ENCODE measurements at regions of chr16 and their contacts with region 1.

Region 1: DNA sequence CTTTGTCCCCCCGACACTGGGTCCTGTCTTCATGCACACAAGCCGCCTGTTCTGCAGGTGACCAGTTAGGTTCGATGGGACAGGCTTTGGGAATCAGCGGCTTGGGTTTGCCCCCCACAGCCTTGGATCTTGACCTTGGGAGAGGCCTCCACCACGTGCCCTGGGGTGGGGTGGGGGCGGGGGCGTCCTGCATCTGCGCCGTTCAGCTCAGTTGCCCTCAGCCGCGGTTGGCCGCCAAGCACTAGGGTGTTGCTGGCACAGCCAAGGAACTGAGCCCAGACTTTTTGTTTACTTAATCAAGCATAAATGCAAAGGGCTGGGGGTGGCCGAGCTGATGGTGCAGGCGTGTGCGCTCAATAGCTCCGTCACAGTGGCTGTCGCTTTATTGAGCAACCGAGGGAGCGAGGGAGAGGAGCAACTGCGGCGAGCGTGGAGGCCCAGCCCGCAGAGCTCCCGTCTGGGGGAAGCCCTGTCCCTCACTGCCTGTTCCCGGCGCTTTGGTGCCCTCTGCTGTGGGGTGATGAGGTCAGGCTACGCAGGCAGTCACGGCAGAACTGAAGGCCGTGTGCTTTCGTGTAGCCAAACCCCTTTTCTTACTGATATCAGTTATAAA is 33.9 kb downstream of the JPH3 start:
- DNase-seq: peak; percentile 93
- ATAC-seq: peak; percentile 91
- H3K4me3 Mint-ChIP-seq: peak overlapping the region; percentile 63
- H3K27ac Mint-ChIP-seq: no peak overlapping the region
- H3K4me1 Mint-ChIP-seq: peaks cover 17% of the 10 kb centered on the region
- H3K27me3 Mint-ChIP-seq: no peaks in the 10 kb centered on the region
- CTCF ChIP-seq: peak; percentile 80

Region 2: GRCh38 chr16:87375426-87376135 is 260.6 kb before region 1 on chr16:
- CTCF ChIA-PET with region 1: no interaction called
- POLR2A ChIA-PET with region 1: no interaction called
- intact Hi-C with region 1: no loop called
- DNase-seq: no peak
- ATAC-seq: no peak
- H3K4me3 Mint-ChIP-seq: no peak overlapping the region
- H3K27ac Mint-ChIP-seq: no peak overlapping the region
- H3K4me1 Mint-ChIP-seq: peaks cover 48% of the 10 kb centered on the region
- H3K27me3 Mint-ChIP-seq: no peaks in the 10 kb centered on the region
- CTCF ChIP-seq: no peak

Region 3: GRCh38 chr16:87393680-87394055 is 242.5 kb before region 1 on chr16:
- CTCF ChIA-PET with region 1: interaction called, 25 read pairs
- POLR2A ChIA-PET with region 1: no interaction called
- intact Hi-C with region 1: no loop called
- DNase-seq: no peak
- ATAC-seq: no peak
- H3K4me3 Mint-ChIP-seq: peak overlapping the region; percentile 83
- H3K27ac Mint-ChIP-seq: peak overlapping the region; percentile 90
- H3K4me1 Mint-ChIP-seq: peaks cover 43% of the 10 kb centered on the region
- H3K27me3 Mint-ChIP-seq: no peaks in the 10 kb centered on the region
- CTCF ChIP-seq: no peak

Region 4: DNA sequence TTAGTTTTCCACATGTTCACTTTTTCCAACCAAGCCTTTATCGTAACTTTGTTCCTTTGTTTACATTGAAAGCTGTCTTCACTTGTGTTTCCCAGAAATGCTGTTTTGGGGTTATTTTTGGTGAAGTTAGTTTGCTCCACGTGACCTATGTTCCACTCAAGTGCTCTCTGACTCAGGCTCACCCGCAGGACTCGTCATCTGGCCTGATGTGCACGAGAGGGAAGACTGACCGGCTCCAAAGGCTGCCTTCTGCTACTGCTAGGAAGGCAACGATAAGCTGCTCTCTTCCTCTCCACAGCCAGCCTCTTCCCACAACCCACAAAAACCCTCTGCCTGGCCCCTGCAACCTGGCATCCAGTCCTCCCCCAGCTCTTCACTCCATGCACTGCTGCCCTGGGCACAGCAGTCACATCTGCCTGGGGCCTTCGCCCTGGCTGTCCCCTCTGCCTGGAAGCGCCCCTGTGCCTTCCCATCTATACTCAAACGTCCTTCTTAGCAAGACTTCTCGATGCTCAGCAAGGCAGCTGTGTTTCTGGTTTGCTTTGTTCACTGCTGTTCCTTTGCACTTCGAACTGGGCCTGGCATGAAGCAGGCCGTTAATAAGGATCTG is 171.4 kb before region 1 on chr16:
- CTCF ChIA-PET with region 1: interaction called, 16 read pairs
- POLR2A ChIA-PET with region 1: interaction called, 4 read pairs
- intact Hi-C with region 1: no loop called
- DNase-seq: peak; percentile 67
- ATAC-seq: peak; percentile 65
- H3K4me3 Mint-ChIP-seq: peak overlapping the region; percentile 66
- H3K27ac Mint-ChIP-seq: peak overlapping the region; percentile 86
- H3K4me1 Mint-ChIP-seq: peaks cover 40% of the 10 kb centered on the region
- H3K27me3 Mint-ChIP-seq: no peaks in the 10 kb centered on the region
- CTCF ChIP-seq: no peak

Region 5: DNA sequence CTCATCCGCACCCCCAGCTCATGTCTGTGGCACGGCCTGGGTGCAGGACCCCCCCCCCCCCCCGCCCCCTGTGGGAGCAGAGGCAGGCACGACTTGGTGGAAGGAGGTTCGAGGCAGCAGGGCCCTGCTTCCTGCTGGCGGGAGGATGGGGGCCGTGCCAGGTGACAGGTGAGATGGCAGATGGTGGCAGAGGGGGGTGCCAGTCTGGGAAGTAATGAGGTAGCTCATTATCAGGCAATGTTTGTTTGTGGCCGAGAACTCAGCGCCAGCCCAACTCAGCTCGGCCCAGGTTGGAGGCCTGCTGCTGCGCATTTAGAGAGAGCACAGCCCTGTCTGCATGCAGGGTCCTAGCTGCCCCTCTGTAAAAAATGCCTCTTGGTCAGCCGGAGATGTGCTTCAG is 74.0 kb before region 1 on chr16:
- CTCF ChIA-PET with region 1: interaction called, 10 read pairs
- POLR2A ChIA-PET with region 1: no interaction called
- intact Hi-C with region 1: no loop called
- DNase-seq: no peak
- ATAC-seq: no peak
- H3K4me3 Mint-ChIP-seq: no peak overlapping the region
- H3K27ac Mint-ChIP-seq: no peak overlapping the region
- H3K4me1 Mint-ChIP-seq: no peaks in the 10 kb centered on the region
- H3K27me3 Mint-ChIP-seq: peaks cover 4% of the 10 kb centered on the region
- CTCF ChIP-seq: no peak

Region 6: GRCh38 chr16:87593710-87594258 is 42.4 kb before region 1 on chr16:
- CTCF ChIA-PET with region 1: interaction called, 27 read pairs
- POLR2A ChIA-PET with region 1: no interaction called
- intact Hi-C with region 1: loop called (anchors 10 kb)
- DNase-seq: no peak
- ATAC-seq: no peak
- H3K4me3 Mint-ChIP-seq: no peak overlapping the region
- H3K27ac Mint-ChIP-seq: no peak overlapping the region
- H3K4me1 Mint-ChIP-seq: no peaks in the 10 kb centered on the region
- H3K27me3 Mint-ChIP-seq: peaks cover 28% of the 10 kb centered on the region
- CTCF ChIP-seq: no peak

Region 7: GRCh38 chr16:87765776-87766484 is 129.8 kb after region 1 on chr16 and contains the start of gene KLHDC4:
- CTCF ChIA-PET with region 1: interaction called, 11 read pairs
- POLR2A ChIA-PET with region 1: no interaction called
- intact Hi-C with region 1: no loop called
- DNase-seq: peak; percentile 94
- ATAC-seq: peak; percentile 72
- H3K4me3 Mint-ChIP-seq: peak within 1 kb of the TSS; percentile 86
- H3K27ac Mint-ChIP-seq: peak within 1 kb of the TSS; percentile 94
- H3K4me1 Mint-ChIP-seq: peaks cover 31% of the 10 kb centered on the region
- H3K27me3 Mint-ChIP-seq: no peaks in the 10 kb centered on the region
- CTCF ChIP-seq: no peak
- total RNA-seq, gene KLHDC4: 80.8 to 81.7 TPM